ENCODE measurements at regions of chr6 and their contacts with region 1.

Region 1: DNA sequence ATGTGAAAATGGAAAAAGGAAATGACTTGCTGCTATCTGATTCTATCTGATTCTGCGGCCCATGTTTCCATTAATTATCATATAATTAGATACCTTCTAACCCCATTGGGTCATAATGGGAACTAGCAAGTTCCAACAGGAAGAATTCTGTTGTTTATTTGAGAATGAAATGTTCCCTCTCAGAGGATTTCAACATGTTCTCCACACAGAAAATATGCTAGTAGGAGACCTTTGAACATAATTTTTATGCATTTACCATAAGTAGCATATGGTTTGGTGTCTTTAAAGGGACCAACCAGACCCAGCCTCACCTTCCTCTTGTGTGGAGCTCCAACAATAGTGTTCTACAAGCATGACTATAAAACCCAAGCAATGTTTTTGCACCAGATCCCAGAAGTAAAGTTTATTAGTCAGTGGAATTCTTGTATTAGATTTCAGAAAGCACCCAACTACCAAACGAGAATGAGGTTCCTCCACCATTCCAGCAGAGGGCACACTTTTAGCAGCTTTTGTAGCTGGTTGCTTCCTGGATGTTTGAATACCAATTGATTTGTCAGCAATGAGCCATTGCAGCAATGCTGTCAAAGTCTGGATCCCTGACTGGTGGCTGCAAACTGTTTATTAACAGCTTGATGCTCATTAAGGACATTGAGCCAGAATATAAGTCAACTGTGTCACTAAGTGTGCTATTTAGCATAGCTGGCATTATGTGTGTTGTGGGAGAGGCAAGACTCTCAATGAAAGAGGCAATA is 143.6 kb upstream of the GJE1 start:
- DNase-seq: peak; percentile 71
- H3K4me3 ChIP-seq: no peak overlapping the region
- H3K27ac ChIP-seq: no peak overlapping the region
- H3K4me1 ChIP-seq: no peaks in the 10 kb centered on the region
- H3K27me3 ChIP-seq: no peaks in the 10 kb centered on the region
- CTCF ChIP-seq: peak; percentile 70 to 76
- POLR2A ChIP-seq: no peak

Region 2: DNA sequence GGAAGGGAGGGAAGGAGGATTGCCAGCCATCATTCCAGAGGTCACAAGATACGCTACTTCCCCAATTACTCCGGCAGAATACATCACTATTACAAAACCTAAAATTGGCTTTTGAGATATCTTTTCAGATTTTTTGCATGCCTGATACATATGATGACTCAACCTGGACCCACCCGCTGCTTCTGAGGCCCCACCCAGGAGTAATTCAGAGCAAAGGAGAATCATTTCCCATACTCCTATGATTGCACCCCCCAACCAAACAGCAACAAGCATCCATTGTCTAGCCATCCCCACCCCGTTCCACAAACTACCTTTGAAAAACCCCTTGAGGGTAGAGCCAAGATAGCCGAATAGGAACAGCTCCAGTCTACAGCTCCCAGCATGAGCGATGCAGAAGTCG is 19.9 kb before region 1 on chr6:
- CTCF ChIA-PET with region 1: no interaction called
- POLR2A ChIA-PET with region 1: no interaction called
- dilution Hi-C with region 1: no loop called
- intact Hi-C with region 1: no loop called
- DNase-seq: no peak
- H3K4me3 ChIP-seq: no peak overlapping the region
- H3K27ac ChIP-seq: no peak overlapping the region
- H3K4me1 ChIP-seq: no peaks in the 10 kb centered on the region
- H3K27me3 ChIP-seq: no peaks in the 10 kb centered on the region
- CTCF ChIP-seq: no peak
- POLR2A ChIP-seq: no peak

Region 3: DNA sequence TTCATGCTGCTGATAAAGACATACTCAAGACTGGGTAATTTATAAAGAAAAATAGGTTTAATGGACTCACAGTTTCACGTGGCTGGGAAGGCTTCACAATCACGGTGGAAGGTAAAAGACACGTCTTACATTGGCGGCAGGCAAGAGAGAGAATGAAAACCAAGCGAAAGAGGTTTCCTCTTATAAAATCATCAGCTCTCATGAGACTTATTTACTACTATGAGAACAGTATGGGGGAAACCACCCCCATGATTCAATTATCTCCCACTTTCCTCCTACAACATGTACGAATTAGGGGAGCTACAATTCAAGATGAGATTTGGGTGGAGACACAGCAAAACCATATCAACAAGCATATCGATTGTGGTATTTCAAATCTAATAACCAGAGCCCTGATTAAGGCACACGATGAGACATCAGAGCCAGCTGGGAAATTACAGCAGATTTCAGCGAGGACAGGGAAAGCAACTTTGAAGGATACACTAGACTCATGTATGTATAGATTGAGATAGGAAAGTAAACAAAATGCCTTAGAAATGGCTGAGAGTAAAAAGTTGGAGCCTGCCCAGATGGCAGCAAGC is 13.8 kb after region 1 on chr6:
- CTCF ChIA-PET with region 1: interaction called, 12 read pairs
- POLR2A ChIA-PET with region 1: no interaction called
- dilution Hi-C with region 1: no loop called
- intact Hi-C with region 1: no loop called
- DNase-seq: no peak
- H3K4me3 ChIP-seq: no peak overlapping the region
- H3K27ac ChIP-seq: no peak overlapping the region
- H3K4me1 ChIP-seq: no peaks in the 10 kb centered on the region
- H3K27me3 ChIP-seq: no peaks in the 10 kb centered on the region
- CTCF ChIP-seq: no peak
- POLR2A ChIP-seq: no peak

Region 4: GRCh38 chr6:142045380-142046278 is 56.5 kb after region 1 on chr6:
- CTCF ChIA-PET with region 1: interaction called, 13 read pairs
- POLR2A ChIA-PET with region 1: no interaction called
- dilution Hi-C with region 1: no loop called
- intact Hi-C with region 1: loop called (anchors 1 kb)
- DNase-seq: peak; percentile 26
- H3K4me3 ChIP-seq: no peak overlapping the region
- H3K27ac ChIP-seq: no peak overlapping the region
- H3K4me1 ChIP-seq: no peaks in the 10 kb centered on the region
- H3K27me3 ChIP-seq: no peaks in the 10 kb centered on the region
- CTCF ChIP-seq: no peak
- POLR2A ChIP-seq: no peak

Region 5: GRCh38 chr6:142071981-142072380 is 82.9 kb after region 1 on chr6:
- CTCF ChIA-PET with region 1: interaction called, 14 read pairs
- POLR2A ChIA-PET with region 1: no interaction called
- dilution Hi-C with region 1: no loop called
- intact Hi-C with region 1: loop called (anchors 1 kb)
- DNase-seq: no peak
- H3K4me3 ChIP-seq: no peak overlapping the region
- H3K27ac ChIP-seq: no peak overlapping the region
- H3K4me1 ChIP-seq: no peaks in the 10 kb centered on the region
- H3K27me3 ChIP-seq: no peaks in the 10 kb centered on the region
- CTCF ChIP-seq: no peak
- POLR2A ChIP-seq: no peak

Region 6: GRCh38 chr6:142207265-142207877 is 218.2 kb after region 1 on chr6:
- CTCF ChIA-PET with region 1: interaction called, 46 read pairs
- POLR2A ChIA-PET with region 1: no interaction called
- dilution Hi-C with region 1: no loop called
- intact Hi-C with region 1: loop called (anchors 1 kb)
- DNase-seq: peak; percentile 71
- H3K4me3 ChIP-seq: no peak overlapping the region
- H3K27ac ChIP-seq: no peak overlapping the region
- H3K4me1 ChIP-seq: peaks cover 14% of the 10 kb centered on the region
- H3K27me3 ChIP-seq: no peaks in the 10 kb centered on the region
- CTCF ChIP-seq: peak; percentile 73
- POLR2A ChIP-seq: no peak

Measured in endothelial cell of umbilical vein (primary cell).